Activated naive CD4-positive, alpha-beta T cell treated with anti-CD3 and anti-CD28 coated beads, Interleukin-2, amount 10 ng/mL, durations not matched to agents 7 days and 5 days (primary cell): ENCODE measurements at regions of chr20 and their contacts with region 1.

Region 1: GRCh38 chr20:50929299-50930138 is 1.7 kb downstream of the ADNP start:
- DNase-seq: peak; percentile 97
- H3K4me3 Mint-ChIP-seq: peak overlapping the region; percentile 93
- H3K27ac Mint-ChIP-seq: peak overlapping the region; percentile 98
- H3K4me1 Mint-ChIP-seq: peaks cover 61% of the 10 kb centered on the region
- H3K27me3 Mint-ChIP-seq: no peaks in the 10 kb centered on the region

Region 2: GRCh38 chr20:50790651-50791277 is 138.8 kb before region 1 on chr20:
- CTCF ChIA-PET with region 1: interaction called, 167 read pairs
- DNase-seq: peak; percentile 85
- H3K4me3 Mint-ChIP-seq: no peak overlapping the region
- H3K27ac Mint-ChIP-seq: peak overlapping the region; percentile 52
- H3K4me1 Mint-ChIP-seq: peaks cover 28% of the 10 kb centered on the region
- H3K27me3 Mint-ChIP-seq: peaks cover 17% of the 10 kb centered on the region

Region 3: GRCh38 chr20:50815162-50815989 is 114.1 kb before region 1 on chr20:
- CTCF ChIA-PET with region 1: interaction called, 26 read pairs
- DNase-seq: peak; percentile 26
- H3K4me3 Mint-ChIP-seq: peak overlapping the region; percentile 46
- H3K27ac Mint-ChIP-seq: peak overlapping the region; percentile 83
- H3K4me1 Mint-ChIP-seq: peaks cover 52% of the 10 kb centered on the region
- H3K27me3 Mint-ChIP-seq: peaks cover 5% of the 10 kb centered on the region

Region 4: DNA sequence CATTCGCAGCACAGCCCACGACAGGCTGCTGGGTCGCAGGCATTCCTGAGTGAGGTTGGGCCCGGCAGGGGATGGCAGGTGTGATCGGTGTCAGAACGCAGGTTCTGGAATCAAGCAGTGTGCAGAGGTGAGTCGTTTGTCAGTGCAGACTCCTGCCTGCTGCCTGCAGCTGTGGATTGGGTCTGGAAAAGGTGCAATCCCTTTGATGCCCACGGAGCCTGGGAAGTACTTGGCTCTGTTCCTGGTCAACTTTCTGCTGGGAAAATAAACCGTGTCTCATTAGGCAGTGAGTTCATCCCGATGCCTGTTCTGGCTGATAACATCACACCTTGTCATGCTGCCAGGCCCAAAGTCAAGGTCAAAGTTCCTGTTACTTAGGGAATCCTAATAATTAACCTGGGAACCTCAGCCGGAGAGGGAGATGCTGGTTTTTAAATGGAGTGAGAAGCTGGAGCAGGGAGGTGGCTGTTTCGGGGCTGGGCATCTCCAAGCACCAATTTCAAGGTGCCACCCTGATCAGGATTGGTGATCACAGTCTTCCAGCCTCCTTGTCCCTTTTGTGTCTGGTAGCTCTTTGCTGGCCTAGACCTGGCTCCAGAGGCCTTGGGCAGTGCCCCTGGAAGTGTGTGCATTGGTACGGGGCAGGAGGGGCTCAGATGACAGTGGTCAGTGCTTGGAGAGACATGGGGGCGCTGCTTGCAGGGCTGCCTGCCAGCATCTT is 73.3 kb before region 1 on chr20:
- CTCF ChIA-PET with region 1: no interaction called
- DNase-seq: no peak
- H3K4me3 Mint-ChIP-seq: no peak overlapping the region
- H3K27ac Mint-ChIP-seq: no peak overlapping the region
- H3K4me1 Mint-ChIP-seq: no peaks in the 10 kb centered on the region
- H3K27me3 Mint-ChIP-seq: no peaks in the 10 kb centered on the region

Region 5: DNA sequence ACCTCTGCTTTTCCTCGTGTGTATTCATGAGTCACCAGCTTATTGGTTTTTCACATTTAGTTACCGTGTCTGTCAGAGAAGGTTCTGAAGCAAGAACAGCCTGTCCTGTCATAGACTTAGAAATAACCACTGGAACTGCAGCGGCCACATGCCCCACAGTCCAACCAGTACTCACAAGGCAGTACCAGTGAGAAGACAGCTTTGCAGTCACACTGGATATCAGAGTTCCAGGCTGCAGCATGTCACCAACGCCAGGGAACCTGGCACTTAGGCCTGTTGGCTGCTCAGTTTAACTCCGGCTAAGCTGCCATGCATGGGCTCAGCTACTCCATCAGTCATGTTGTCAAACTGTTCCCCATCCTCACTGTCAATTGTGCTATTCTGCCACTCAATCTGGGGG is 38.4 kb before region 1 on chr20:
- CTCF ChIA-PET with region 1: interaction called, 14 read pairs
- DNase-seq: no peak
- H3K4me3 Mint-ChIP-seq: no peak overlapping the region
- H3K27ac Mint-ChIP-seq: no peak overlapping the region
- H3K4me1 Mint-ChIP-seq: no peaks in the 10 kb centered on the region
- H3K27me3 Mint-ChIP-seq: no peaks in the 10 kb centered on the region

Region 6: GRCh38 chr20:50958615-50959542 is 29.4 kb after region 1 on chr20 and contains the start of gene MOCS3:
- CTCF ChIA-PET with region 1: interaction called, 17 read pairs
- DNase-seq: peak; percentile 91
- H3K4me3 Mint-ChIP-seq: peak within 1 kb of the TSS; percentile 99
- H3K27ac Mint-ChIP-seq: peak within 1 kb of the TSS; percentile 96
- H3K4me1 Mint-ChIP-seq: peaks cover 58% of the 10 kb centered on the region
- H3K27me3 Mint-ChIP-seq: no peaks in the 10 kb centered on the region

Region 7: DNA sequence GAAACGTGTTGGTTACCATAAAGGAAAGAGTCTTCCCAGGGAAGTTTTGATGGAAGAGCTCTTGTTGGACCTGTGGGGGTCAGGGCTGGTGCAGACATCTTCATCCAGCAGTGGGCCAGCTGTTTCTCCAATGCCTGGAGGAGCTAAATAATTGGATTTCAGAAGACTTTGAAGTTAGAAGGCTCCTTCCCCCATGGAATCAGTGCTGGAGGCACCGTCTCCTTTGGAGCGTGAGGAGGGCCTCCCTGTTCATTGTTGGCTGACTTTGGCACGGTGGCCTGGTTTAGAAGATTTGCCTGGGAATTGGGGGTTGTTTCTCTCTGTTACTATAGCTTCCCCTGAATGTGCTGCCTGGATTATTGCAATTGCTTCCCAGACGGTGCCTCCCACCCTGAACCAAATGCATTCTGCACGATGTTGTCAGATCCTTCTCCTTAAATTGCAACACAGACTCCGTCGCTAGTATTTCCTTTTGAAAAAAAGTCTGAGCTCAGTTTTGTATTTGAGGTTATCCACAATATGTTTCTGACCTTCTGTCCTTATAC is 121.1 kb after region 1 on chr20:
- CTCF ChIA-PET with region 1: no interaction called
- DNase-seq: no peak
- H3K4me3 Mint-ChIP-seq: no peak overlapping the region
- H3K27ac Mint-ChIP-seq: no peak overlapping the region
- H3K4me1 Mint-ChIP-seq: no peaks in the 10 kb centered on the region
- H3K27me3 Mint-ChIP-seq: peaks cover 29% of the 10 kb centered on the region